ENCODE measurements at regions of chr9 and their contacts with region 1.

Region 1: GRCh38 chr9:121222524-121223171 is 21.0 kb upstream of the RAB14 start:
- DNase-seq: peak in 1 of 7 donors; percentile 21
- H3K4me3 ChIP-seq: no peak overlapping the region
- H3K27ac ChIP-seq: no peak overlapping the region
- H3K4me1 ChIP-seq: peaks cover 0 to 6% of the 10 kb centered on the region in 2 donors
- H3K27me3 ChIP-seq: no peaks in the 10 kb centered on the region
- CTCF ChIP-seq: peak; percentile 56 to 78 (median 67)
- POLR2A ChIP-seq: no peak

Region 2: GRCh38 chr9:121383715-121384114 is 161.1 kb after region 1 on chr9:
- intact Hi-C with region 1: loop called in 1 of 2 experiments (anchors 5 kb)
- DNase-seq: no peak
- H3K4me3 ChIP-seq: no peak overlapping the region
- H3K27ac ChIP-seq: no peak overlapping the region
- H3K4me1 ChIP-seq: no peaks in the 10 kb centered on the region
- H3K27me3 ChIP-seq: no peaks in the 10 kb centered on the region
- CTCF ChIP-seq: no peak
- POLR2A ChIP-seq: no peak